H1 (cell line): ENCODE measurements at regions of chr9 and their contacts with region 1.

Region 1: GRCh38 chr9:6640268-6641072 is 5.1 kb downstream of the GLDC start:
- DNase-seq: no peak
- H3K4me3 ChIP-seq: no peak overlapping the region
- H3K27ac ChIP-seq: no peak overlapping the region
- H3K4me1 ChIP-seq: peaks cover 0 to 4% (median under 1%) of the 10 kb centered on the region in 4 experiments; a peak in 3 of 7 replicates
- H3K27me3 ChIP-seq: peaks cover 0 to 11% (median 7%) of the 10 kb centered on the region in 4 experiments; a peak in 5 of 7 replicates
- CTCF ChIP-seq: no peak
- EP300 ChIP-seq: no peak
- POLR2A ChIP-seq: no peak
- RAD21 ChIP-seq: no peak

Region 2: DNA sequence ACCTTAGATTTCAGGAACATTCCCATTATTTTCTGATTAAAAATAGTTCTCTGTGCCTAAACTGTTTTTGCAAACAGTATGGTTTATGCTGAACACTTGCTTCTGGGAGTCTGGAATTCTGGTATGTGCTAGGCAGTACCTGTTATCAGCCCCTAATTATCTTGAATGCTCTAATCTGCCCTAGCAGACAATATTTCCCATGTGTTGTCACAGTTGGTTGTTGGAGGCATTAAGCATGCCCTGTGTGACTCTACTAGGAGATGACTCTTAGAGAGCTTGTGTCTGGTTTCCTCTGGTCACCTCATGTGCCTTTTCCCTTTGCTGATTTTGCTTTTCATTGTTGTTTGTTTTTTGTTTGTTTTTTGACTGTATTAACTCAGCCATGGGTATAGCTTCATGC is 190.8 kb before region 1 on chr9:
- CTCF ChIA-PET with region 1: no interaction called
- POLR2A ChIA-PET with region 1: no interaction called
- DNase-seq: no peak
- H3K4me3 ChIP-seq: no peak overlapping the region
- H3K27ac ChIP-seq: no peak overlapping the region
- H3K4me1 ChIP-seq: peaks cover 0 to 5% (median 0%) of the 10 kb centered on the region in 4 experiments; a peak in 1 of 7 replicates
- H3K27me3 ChIP-seq: no peaks in the 10 kb centered on the region
- CTCF ChIP-seq: no peak
- EP300 ChIP-seq: no peak
- POLR2A ChIP-seq: no peak
- RAD21 ChIP-seq: no peak

Region 3: GRCh38 chr9:6628704-6629103 is 11.8 kb before region 1 on chr9:
- CTCF ChIA-PET with region 1: interaction called, 9 read pairs
- POLR2A ChIA-PET with region 1: interaction called, 10 read pairs
- DNase-seq: no peak
- H3K4me3 ChIP-seq: no peak overlapping the region
- H3K27ac ChIP-seq: no peak overlapping the region
- H3K4me1 ChIP-seq: peaks cover 2 to 9% (median 5%) of the 10 kb centered on the region in 4 experiments; a peak in 5 of 7 replicates
- H3K27me3 ChIP-seq: no peaks in the 10 kb centered on the region
- CTCF ChIP-seq: no peak
- EP300 ChIP-seq: no peak
- POLR2A ChIP-seq: no peak
- RAD21 ChIP-seq: no peak

Region 4: GRCh38 chr9:6708732-6709131 is 68.3 kb after region 1 on chr9:
- CTCF ChIA-PET with region 1: no interaction called
- POLR2A ChIA-PET with region 1: no interaction called
- DNase-seq: no peak
- H3K4me3 ChIP-seq: no peak overlapping the region
- H3K27ac ChIP-seq: no peak overlapping the region
- H3K4me1 ChIP-seq: peaks cover 0 to 6% (median 2%) of the 10 kb centered on the region in 4 experiments; a peak in 3 of 7 replicates
- H3K27me3 ChIP-seq: no peaks in the 10 kb centered on the region
- CTCF ChIP-seq: no peak
- EP300 ChIP-seq: no peak
- POLR2A ChIP-seq: no peak
- RAD21 ChIP-seq: no peak

Region 5: GRCh38 chr9:6833518-6834192 is 193.2 kb after region 1 on chr9:
- CTCF ChIA-PET with region 1: no interaction called
- POLR2A ChIA-PET with region 1: no interaction called
- DNase-seq: no peak
- H3K4me3 ChIP-seq: no peak overlapping the region
- H3K27ac ChIP-seq: no peak overlapping the region
- H3K4me1 ChIP-seq: no peaks in the 10 kb centered on the region
- H3K27me3 ChIP-seq: no peaks in the 10 kb centered on the region
- CTCF ChIP-seq: no peak
- EP300 ChIP-seq: no peak
- POLR2A ChIP-seq: no peak
- RAD21 ChIP-seq: no peak

Region 6: DNA sequence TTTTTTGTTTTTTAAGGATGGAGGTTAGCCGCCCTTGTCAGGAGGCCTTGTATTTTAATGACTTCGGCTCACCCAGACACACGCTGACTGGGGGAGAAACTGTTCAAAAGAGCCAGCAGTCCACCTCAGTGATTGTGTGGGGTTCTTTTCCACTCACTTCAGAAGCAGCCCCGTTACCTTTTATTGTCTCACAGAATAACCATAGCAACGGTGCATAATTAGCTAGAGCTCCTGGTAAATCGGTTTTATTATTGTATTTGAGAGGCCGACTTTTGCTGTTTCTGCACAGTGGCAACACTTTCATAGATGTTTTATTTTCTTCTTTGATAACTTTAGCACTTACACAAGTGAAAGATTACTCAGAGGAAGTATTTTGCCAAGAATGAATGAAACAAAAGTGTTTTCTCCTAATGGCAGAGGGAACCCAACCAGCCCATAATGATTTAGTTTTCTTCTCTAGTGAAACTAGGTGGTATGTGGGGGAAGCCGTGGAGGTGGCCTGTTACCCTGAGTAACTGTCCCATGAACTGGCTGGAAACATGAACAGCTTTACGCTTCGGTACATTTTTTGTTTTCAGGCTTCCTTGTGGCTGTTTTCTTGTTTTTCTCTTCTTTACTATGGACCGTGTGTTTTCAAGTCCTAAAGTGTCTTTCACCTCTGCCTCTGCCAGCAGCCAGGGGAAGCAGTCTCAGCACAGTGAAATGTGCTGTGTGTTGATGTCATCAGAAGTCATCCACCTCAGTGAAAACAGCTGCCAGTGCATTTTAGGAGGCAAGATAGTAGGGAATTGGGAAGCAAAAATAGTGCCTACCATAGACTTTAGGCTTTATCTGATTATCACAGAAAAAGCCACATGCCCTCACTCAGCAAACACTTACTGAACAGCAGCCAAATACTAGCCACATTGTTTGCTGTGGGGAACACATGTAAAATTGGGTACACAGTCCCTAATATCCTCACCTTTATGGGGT is 532.0 kb after region 1 on chr9:
- CTCF ChIA-PET with region 1: no interaction called
- POLR2A ChIA-PET with region 1: no interaction called
- DNase-seq: no peak
- H3K4me3 ChIP-seq: no peak overlapping the region
- H3K27ac ChIP-seq: no peak overlapping the region; the same call in 1 of the 2 replicates
- H3K4me1 ChIP-seq: peaks cover 0 to 6% (median 4%) of the 10 kb centered on the region in 4 experiments; a peak in 4 of 7 replicates
- H3K27me3 ChIP-seq: no peaks in the 10 kb centered on the region
- CTCF ChIP-seq: no peak
- EP300 ChIP-seq: no peak
- POLR2A ChIP-seq: no peak
- RAD21 ChIP-seq: no peak